ENCODE measurements at regions of chr2 and their contacts with region 1.

Region 1: DNA sequence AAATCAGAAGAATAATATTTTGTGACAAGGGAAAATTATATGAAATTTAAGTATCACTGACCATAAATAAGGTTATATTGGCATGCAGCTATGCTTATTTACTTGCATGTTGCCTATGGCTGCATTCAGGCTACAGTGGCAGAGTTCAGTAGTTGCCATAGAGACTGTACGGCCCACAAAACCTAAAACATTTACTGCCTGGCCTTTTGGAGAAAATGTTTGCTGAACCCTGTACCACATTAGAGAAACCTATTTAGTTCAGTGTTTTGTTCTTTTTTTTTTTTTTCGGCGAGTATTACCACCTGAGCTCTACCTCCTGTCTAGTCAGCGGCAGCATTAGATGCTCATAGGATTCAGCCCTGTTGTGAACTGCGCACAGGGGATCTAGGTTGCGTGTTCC is 163.7 kb downstream of the MCFD2 start:
- DNase-seq: no peak
- ATAC-seq: no peak
- H3K4me3 Mint-ChIP-seq: no peak overlapping the region
- H3K27ac Mint-ChIP-seq: no peak overlapping the region
- H3K4me1 Mint-ChIP-seq: peaks cover 47% of the 10 kb centered on the region
- H3K27me3 Mint-ChIP-seq: no peaks in the 10 kb centered on the region
- CTCF ChIP-seq: no peak

Region 2: GRCh38 chr2:46769809-46770208 is 17.9 kb after region 1 on chr2:
- CTCF ChIA-PET with region 1: no interaction called
- POLR2A ChIA-PET with region 1: no interaction called
- intact Hi-C with region 1: loop called (anchors 2 kb)
- DNase-seq: no peak
- ATAC-seq: no peak
- H3K4me3 Mint-ChIP-seq: no peak overlapping the region
- H3K27ac Mint-ChIP-seq: no peak overlapping the region
- H3K4me1 Mint-ChIP-seq: no peaks in the 10 kb centered on the region
- H3K27me3 Mint-ChIP-seq: no peaks in the 10 kb centered on the region
- CTCF ChIP-seq: no peak

Region 3: GRCh38 chr2:47869859-47870258 is 1118.0 kb after region 1 on chr2:
- CTCF ChIA-PET with region 1: no interaction called
- POLR2A ChIA-PET with region 1: no interaction called
- intact Hi-C with region 1: no loop called
- DNase-seq: no peak
- ATAC-seq: no peak
- H3K4me3 Mint-ChIP-seq: no peak overlapping the region
- H3K27ac Mint-ChIP-seq: peak overlapping the region; percentile 50
- H3K4me1 Mint-ChIP-seq: peaks cover 75% of the 10 kb centered on the region
- H3K27me3 Mint-ChIP-seq: no peaks in the 10 kb centered on the region
- CTCF ChIP-seq: no peak

Measured in activated B cell treated with CpG ODN at 0.5 μM for 24 hours (primary cell).